Caco-2 (cell line): ENCODE measurements at regions of chr10 and their contacts with region 1.

Region 1: DNA sequence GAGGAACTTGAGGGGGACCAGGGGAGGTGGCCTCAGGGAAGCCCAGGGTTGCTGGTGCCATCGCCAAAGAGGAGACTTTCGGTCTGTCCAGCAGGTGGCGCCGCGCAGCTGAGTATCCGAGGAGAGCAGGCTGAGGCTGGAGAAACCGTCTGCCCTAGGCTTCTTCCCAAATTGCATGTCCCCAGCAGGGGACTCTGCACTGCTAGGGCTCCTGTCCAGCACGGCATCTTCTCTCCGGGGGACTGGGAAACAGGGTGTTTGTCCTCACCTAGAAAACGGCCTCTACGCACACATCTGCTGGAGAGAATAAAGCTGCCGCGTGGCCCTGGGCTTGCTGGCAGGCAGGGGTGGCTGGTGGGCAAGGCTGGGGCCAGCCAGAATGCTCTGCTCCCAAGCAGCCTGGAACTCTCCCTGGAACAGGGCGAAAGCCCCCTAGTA is 161.9 kb downstream of the SH2D4B start:
- DNase-seq: peak; percentile 83 to 90
- H3K4me3 ChIP-seq: no peak overlapping the region
- H3K4me3 Mint-ChIP-seq: no peak overlapping the region
- H3K27ac Mint-ChIP-seq: no peak overlapping the region
- H3K4me1 ChIP-seq: no peaks in the 10 kb centered on the region
- H3K4me1 Mint-ChIP-seq: peaks cover 8% of the 10 kb centered on the region
- H3K27me3 ChIP-seq: no peaks in the 10 kb centered on the region
- H3K27me3 Mint-ChIP-seq: no peaks in the 10 kb centered on the region
- CTCF ChIP-seq: peak; percentile 90 to 94

Region 2: GRCh38 chr10:80382989-80383388 is 316.6 kb before region 1 on chr10:
- CTCF ChIA-PET with region 1: no interaction called
- POLR2A ChIA-PET with region 1: no interaction called
- intact Hi-C with region 1: loop called (anchors 1 kb)
- DNase-seq: peak; percentile 43 to 52
- H3K4me3 ChIP-seq: no peak overlapping the region
- H3K4me3 Mint-ChIP-seq: no peak overlapping the region
- H3K27ac Mint-ChIP-seq: no peak overlapping the region
- H3K4me1 ChIP-seq: no peaks in the 10 kb centered on the region
- H3K4me1 Mint-ChIP-seq: peaks cover 5% of the 10 kb centered on the region
- H3K27me3 ChIP-seq: no peaks in the 10 kb centered on the region
- H3K27me3 Mint-ChIP-seq: peaks cover 3% of the 10 kb centered on the region
- CTCF ChIP-seq: peak; percentile 50 to 61

Region 3: DNA sequence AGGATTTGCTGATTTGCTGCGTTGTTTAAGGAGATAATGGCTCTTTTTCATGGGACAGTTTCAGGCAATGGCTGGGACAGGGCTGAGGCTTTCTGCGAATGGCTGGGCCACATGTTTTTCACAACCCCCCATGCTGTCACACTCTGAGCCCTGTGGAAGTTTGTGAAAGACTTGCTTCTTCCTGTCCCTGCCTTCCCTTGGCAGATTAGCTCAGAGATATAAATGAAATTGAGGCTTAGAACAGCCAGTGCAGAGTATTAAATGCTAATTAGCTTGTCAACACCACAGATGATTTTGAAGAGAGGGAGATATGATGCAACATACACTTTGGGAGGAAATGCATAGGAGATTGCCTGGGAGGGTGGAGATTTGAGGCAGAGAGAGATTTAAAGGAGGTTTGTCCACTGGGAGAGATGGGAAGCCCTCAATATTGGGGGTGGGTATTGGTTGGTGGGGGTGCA is 70.1 kb after region 1 on chr10:
- CTCF ChIA-PET with region 1: no interaction called
- POLR2A ChIA-PET with region 1: no interaction called
- intact Hi-C with region 1: loop called (anchors 5 kb)
- DNase-seq: no peak
- H3K4me3 ChIP-seq: no peak overlapping the region
- H3K4me3 Mint-ChIP-seq: peak overlapping the region; percentile 23
- H3K27ac Mint-ChIP-seq: peak overlapping the region; percentile 67
- H3K4me1 ChIP-seq: peaks cover 38% of the 10 kb centered on the region
- H3K4me1 Mint-ChIP-seq: peaks cover 39% of the 10 kb centered on the region
- H3K27me3 ChIP-seq: no peaks in the 10 kb centered on the region
- H3K27me3 Mint-ChIP-seq: peaks cover 2% of the 10 kb centered on the region
- CTCF ChIP-seq: no peak

Region 4: DNA sequence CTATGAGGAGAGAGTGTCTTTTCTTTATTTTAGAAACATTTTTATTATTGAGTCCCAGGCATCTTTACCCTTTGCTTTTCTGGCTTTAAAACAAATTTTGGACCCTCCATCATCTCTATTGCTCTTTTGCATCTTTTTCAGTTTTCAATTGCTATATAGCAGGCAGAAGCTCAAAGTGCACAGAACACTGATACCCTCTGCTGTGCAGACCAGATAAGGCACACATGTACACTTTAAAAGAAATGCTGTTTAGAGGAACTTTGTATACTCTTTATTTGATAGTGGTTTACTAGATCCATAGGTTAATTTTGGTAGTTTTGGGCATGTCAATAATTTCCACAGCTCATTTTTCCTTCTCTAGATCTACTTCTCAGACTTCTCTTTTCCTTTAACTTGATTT is 162.3 kb after region 1 on chr10:
- CTCF ChIA-PET with region 1: interaction called, 8 read pairs
- POLR2A ChIA-PET with region 1: no interaction called
- intact Hi-C with region 1: loop called (anchors 1 kb)
- DNase-seq: no peak
- H3K4me3 ChIP-seq: no peak overlapping the region
- H3K4me3 Mint-ChIP-seq: no peak overlapping the region
- H3K27ac Mint-ChIP-seq: no peak overlapping the region
- H3K4me1 ChIP-seq: no peaks in the 10 kb centered on the region
- H3K4me1 Mint-ChIP-seq: no peaks in the 10 kb centered on the region
- H3K27me3 ChIP-seq: no peaks in the 10 kb centered on the region
- H3K27me3 Mint-ChIP-seq: peaks cover 7% of the 10 kb centered on the region
- CTCF ChIP-seq: peak; percentile 23 to 51

Region 5: GRCh38 chr10:80924063-80924952 is 224.7 kb after region 1 on chr10:
- CTCF ChIA-PET with region 1: interaction called, 7 read pairs
- POLR2A ChIA-PET with region 1: no interaction called
- intact Hi-C with region 1: loop called (anchors 1 kb)
- DNase-seq: peak; percentile 46 to 66
- H3K4me3 ChIP-seq: no peak overlapping the region
- H3K4me3 Mint-ChIP-seq: no peak overlapping the region
- H3K27ac Mint-ChIP-seq: no peak overlapping the region
- H3K4me1 ChIP-seq: no peaks in the 10 kb centered on the region
- H3K4me1 Mint-ChIP-seq: no peaks in the 10 kb centered on the region
- H3K27me3 ChIP-seq: no peaks in the 10 kb centered on the region
- H3K27me3 Mint-ChIP-seq: peaks cover 14% of the 10 kb centered on the region
- CTCF ChIP-seq: peak; percentile 52 to 75

Region 6: DNA sequence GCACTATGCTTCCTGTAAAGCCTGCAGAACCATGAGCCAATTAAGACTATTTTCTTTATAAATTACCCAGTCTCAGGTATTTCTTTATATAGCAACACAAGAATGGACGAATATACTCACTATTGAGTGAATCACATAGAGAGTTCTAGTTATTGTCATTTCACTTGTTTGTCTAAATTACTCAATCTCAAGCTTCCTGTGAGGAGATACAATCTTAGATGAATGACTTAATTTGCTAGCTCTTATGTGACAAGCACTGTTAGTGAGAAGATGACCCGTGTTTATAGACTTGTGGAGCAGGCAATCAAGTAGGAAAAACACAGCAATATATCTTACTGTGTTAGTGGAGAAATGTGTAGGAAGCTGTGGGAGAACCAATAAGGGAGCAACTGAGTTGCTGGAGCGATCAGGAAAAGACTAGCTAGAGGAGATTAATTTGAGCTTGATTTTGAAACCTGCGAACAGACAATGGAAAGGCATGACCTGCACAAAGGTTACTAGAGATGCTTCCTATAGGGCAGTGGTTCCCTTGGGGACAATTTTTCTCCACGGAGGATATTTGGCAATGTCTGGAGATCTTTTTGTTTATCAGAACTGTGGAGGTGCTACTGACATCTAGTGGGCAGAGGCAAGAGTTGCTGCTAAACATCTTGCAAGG is 319.2 kb after region 1 on chr10:
- CTCF ChIA-PET with region 1: no interaction called
- POLR2A ChIA-PET with region 1: no interaction called
- intact Hi-C with region 1: loop called (anchors 1 kb)
- DNase-seq: peak; percentile 46 to 52
- H3K4me3 ChIP-seq: no peak overlapping the region
- H3K4me3 Mint-ChIP-seq: no peak overlapping the region
- H3K27ac Mint-ChIP-seq: no peak overlapping the region
- H3K4me1 ChIP-seq: no peaks in the 10 kb centered on the region
- H3K4me1 Mint-ChIP-seq: no peaks in the 10 kb centered on the region
- H3K27me3 ChIP-seq: no peaks in the 10 kb centered on the region
- H3K27me3 Mint-ChIP-seq: peaks cover 3% of the 10 kb centered on the region
- CTCF ChIP-seq: peak; percentile 72 to 82